ENCODE measurements at regions of chr4 and their contacts with region 1.

Region 1: GRCh38 chr4:103008875-103009729 is 10.4 kb downstream of the SLC9B1 start:
- DNase-seq: peak in 1 of 6 donors; percentile 28
- ATAC-seq: peak; percentile 38 to 87 (median 74)
- H3K4me3 ChIP-seq: no peak overlapping the region
- H3K27ac ChIP-seq: no peak overlapping the region
- H3K4me1 ChIP-seq: peaks cover 17 to 26% (median 18%) of the 10 kb centered on the region in 3 donors
- H3K27me3 ChIP-seq: no peaks in the 10 kb centered on the region
- CTCF ChIP-seq: peak in 3 of 4 donors; percentile 37 to 70 (median 53)

Region 2: GRCh38 chr4:102439812-102440211 is 569.3 kb before region 1 on chr4:
- intact Hi-C with region 1: loop called in 2 of 3 experiments (anchors 5 to 10 kb)
- DNase-seq: no peak
- ATAC-seq: peak in 3 of 4 donors; percentile 42 to 66 (median 65)
- H3K4me3 ChIP-seq: no peak overlapping the region
- H3K27ac ChIP-seq: peak overlapping the region in 1 of 4 donors; percentile 1
- H3K4me1 ChIP-seq: peaks cover 3 to 18% (median 10%) of the 10 kb centered on the region in 3 donors
- H3K27me3 ChIP-seq: no peaks in the 10 kb centered on the region
- CTCF ChIP-seq: no peak

Region 3: DNA sequence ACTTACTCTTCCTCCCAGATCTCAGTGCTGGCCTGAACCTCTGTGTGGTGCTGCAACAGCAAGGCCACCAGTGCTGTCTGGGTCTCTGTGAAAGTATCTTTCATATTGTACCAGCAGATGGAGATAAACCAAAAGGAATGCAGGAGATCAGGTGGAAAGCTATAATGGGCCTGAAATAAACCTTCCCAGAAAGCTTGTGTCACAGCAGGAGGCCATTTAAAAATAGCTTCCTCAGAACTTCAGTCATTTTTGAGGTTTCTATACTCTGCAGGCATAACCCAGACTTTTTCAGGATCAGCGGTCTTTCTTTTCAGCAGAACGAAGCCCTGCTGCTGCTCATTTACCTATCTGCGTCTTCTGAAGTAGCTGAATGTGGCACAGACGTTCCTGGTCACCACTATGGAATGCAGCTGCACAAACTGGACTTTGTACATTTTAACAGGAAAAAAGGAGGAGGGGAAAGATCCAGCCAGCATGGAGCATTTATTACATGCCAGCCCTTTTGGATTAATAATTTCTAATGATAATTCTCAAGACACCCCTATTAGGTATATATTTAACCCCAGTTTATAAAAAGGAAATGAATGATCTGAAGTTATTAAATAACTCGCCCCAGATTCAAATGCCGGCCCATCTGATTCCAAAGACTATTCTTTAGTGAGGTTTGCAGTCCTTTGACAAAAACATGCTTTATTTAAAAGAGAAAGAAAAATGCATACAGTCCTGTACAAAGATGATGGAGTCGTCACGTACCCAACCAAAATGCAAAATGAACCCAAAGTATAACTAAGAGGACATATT is 388.2 kb before region 1 on chr4:
- intact Hi-C with region 1: loop called in 2 of 3 experiments (anchors 10 kb)
- DNase-seq: peak in 4 of 6 donors; percentile 35 to 69 (median 65)
- ATAC-seq: peak; percentile 90 to 96 (median 94)
- H3K4me3 ChIP-seq: peak overlapping the region in 2 of 4 donors; percentile 17 to 34
- H3K27ac ChIP-seq: peak overlapping the region; percentile 77 to 90 (median 84)
- H3K4me1 ChIP-seq: peaks cover 0 to 17% (median 9%) of the 10 kb centered on the region in 3 donors
- H3K27me3 ChIP-seq: no peaks in the 10 kb centered on the region
- CTCF ChIP-seq: peak in 3 of 4 donors; percentile 14 to 39 (median 29)

Region 4: GRCh38 chr4:102901804-102902203 is 107.3 kb before region 1 on chr4:
- intact Hi-C with region 1: no loop called
- DNase-seq: no peak
- ATAC-seq: no peak
- H3K4me3 ChIP-seq: no peak overlapping the region
- H3K27ac ChIP-seq: no peak overlapping the region
- H3K4me1 ChIP-seq: no peaks in the 10 kb centered on the region
- H3K27me3 ChIP-seq: no peaks in the 10 kb centered on the region
- CTCF ChIP-seq: no peak

Region 5: DNA sequence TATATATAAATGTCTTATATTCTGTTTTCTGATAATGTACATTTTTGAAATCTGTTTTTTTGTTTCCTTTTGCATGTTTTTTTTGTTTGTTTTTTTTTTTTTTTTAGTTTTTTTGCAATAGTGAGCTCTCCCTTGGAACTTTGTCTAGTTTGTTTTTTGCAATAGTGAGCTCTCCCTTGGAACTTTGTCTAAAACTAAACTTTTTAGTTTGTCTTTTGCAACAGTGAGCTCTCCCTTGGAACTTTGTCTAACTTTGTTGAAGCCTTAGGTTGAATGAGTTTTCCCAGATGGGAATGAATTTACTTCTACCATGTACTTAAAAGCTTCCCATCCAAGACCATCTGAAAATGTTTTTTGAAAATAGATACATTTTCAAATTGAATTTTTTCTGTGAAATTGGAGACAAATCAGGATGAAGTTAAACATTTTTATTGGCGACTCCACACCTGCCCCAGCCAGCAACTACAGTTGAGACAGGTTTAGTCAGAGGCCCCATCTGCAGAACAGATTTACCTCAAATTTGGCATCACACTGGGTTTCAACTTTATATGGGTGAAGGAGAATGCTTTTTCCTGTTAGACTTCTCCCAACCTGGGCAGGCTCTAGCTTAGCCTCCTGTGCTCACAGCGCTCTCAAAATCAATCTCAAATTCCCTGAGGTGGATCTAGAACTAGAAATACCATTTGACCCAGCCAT is 51.5 kb after region 1 on chr4:
- intact Hi-C with region 1: no loop called
- DNase-seq: no peak
- ATAC-seq: no peak
- H3K4me3 ChIP-seq: no peak overlapping the region
- H3K27ac ChIP-seq: no peak overlapping the region
- H3K4me1 ChIP-seq: no peaks in the 10 kb centered on the region
- H3K27me3 ChIP-seq: no peaks in the 10 kb centered on the region
- CTCF ChIP-seq: no peak

Measured in pancreas (tissue), 10 donors.